HepG2 (cell line): ENCODE measurements at regions of chr12 and their contacts with region 1.

Region 1: DNA sequence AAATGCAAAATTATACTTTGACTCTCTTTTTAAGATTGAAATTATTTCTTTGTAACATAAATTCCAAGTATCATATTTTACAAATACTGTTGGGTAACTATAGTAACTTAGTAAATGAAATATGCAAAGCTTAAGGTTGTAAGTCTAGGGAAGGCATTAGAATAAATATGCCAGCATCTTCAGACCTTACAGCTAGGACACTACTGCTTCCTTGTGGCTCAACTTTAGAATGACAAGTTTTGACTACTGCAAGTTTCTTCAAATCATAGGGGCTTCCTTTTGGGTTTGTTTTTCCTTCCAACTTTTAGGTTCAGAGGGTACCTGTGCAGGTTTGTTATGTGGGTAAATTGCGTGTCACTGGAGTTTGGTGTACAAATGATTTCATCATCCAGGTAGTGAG is 17.7 kb upstream of the ANP32D start:
- DNase-seq: peak; percentile 5
- ATAC-seq: no peak
- H3K4me3 ChIP-seq: no peak overlapping the region
- H3K27ac ChIP-seq: no peak overlapping the region
- H3K4me1 ChIP-seq: no peaks in the 10 kb centered on the region
- H3K27me3 ChIP-seq: 0 out of 5 replicates have a peak, but pooled peaks cover 0 to 4% of the 10 kb centered on the region in 2 experiments
- CTCF ChIP-seq: peak; percentile 52
- EP300 ChIP-seq: no peak
- POLR2A ChIP-seq: no peak
- RAD21 ChIP-seq: no peak

Region 2: GRCh38 chr12:48286665-48287064 is 168.0 kb before region 1 on chr12:
- CTCF ChIA-PET with region 1: interaction called, 5 read pairs
- POLR2A ChIA-PET with region 1: no interaction called
- in situ Hi-C with region 1: no loop called
- intact Hi-C with region 1: loop called (anchors 1 kb)
- DNase-seq: peak; percentile 10
- ATAC-seq: peak; percentile 75
- H3K4me3 ChIP-seq: no peak overlapping the region
- H3K27ac ChIP-seq: no peak overlapping the region
- H3K4me1 ChIP-seq: no peaks in the 10 kb centered on the region
- H3K27me3 ChIP-seq: no peaks in the 10 kb centered on the region
- CTCF ChIP-seq: peak; percentile 46
- EP300 ChIP-seq: no peak
- POLR2A ChIP-seq: no peak
- RAD21 ChIP-seq: no peak

Region 3: DNA sequence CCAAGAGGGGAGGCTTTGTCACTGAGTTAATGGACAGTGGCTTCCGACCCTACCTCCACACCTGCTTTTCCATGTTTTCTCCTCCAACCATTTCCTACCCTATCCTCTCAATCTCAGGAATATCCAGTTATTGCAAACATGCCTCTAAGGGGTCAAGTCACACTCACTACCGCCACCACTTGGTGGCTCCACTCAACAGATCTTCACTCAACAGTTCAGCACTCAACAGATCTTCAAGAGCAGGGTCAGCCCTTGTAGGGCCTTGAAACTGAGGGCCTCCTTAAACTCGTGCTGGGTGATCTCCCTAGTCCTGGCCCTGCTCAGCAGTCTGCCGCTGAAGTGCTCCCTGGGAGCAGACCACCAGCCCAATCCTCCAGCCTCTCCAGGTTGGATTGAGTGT is 118.1 kb before region 1 on chr12:
- CTCF ChIA-PET with region 1: no interaction called
- POLR2A ChIA-PET with region 1: no interaction called
- in situ Hi-C with region 1: no loop called
- intact Hi-C with region 1: loop called (anchors 2 kb)
- DNase-seq: no peak
- ATAC-seq: peak; percentile 36; the same call in 2 of the 3 replicates
- H3K4me3 ChIP-seq: no peak overlapping the region
- H3K27ac ChIP-seq: no peak overlapping the region
- H3K4me1 ChIP-seq: no peaks in the 10 kb centered on the region
- H3K27me3 ChIP-seq: no peaks in the 10 kb centered on the region
- CTCF ChIP-seq: peak; percentile 27; the same call in 1 of the 2 replicates
- EP300 ChIP-seq: no peak
- POLR2A ChIP-seq: no peak
- RAD21 ChIP-seq: no peak